AG04450 (cell line): ENCODE measurements at regions of chr1 and their contacts with region 1.

Region 1: GRCh38 chr1:36300526-36300925 is 5.6 kb upstream of the SH3D21 start:
- DNase-seq: no peak
- H3K4me3 ChIP-seq: no peak overlapping the region
- H3K27ac ChIP-seq: peak overlapping the region; percentile 1
- H3K27me3 ChIP-seq: no peaks in the 10 kb centered on the region
- CTCF ChIP-seq: no peak

Region 2: DNA sequence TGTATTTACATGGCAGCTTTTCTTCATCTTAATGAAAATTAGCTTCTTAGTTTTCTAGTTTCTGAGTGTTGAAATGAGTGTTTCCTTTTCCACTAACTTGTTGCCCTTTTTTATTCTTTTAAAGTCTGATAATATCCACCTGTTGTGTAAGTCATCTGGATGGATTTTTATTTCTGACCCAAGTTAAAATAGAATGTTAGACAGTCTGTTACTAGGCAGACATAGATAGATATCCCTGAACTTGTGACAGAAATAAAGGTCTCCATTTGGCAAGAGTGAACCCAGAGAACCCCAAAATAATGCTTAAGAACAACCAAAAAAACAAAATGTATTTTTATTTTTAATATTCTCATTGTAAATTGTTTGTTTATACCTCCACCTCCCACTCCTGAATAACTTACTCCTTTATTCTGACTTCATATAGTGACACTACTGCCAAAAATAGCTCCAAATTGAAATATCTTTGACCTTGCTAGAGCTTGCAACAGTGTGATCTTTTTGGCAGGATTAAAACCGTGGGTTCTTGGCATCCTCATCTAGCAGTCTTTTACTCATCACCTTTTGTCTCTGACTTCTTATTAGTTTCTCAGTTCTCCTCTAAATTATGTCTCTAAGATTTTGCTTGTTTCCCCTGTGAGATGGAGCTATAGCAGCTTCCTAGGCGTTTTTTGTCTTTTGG is 21.3 kb before region 1 on chr1:
- CTCF ChIA-PET with region 1: interaction called, 17 read pairs
- POLR2A ChIA-PET with region 1: no interaction called
- DNase-seq: no peak
- H3K4me3 ChIP-seq: no peak overlapping the region
- H3K27ac ChIP-seq: no peak overlapping the region
- H3K27me3 ChIP-seq: no peaks in the 10 kb centered on the region
- CTCF ChIP-seq: no peak